Left cardiac atrium (tissue), 4 donors: ENCODE measurements at regions of chr5 and their contacts with region 1.

Region 1: GRCh38 chr5:15834596-15835245 is 334.7 kb downstream of the FBXL7 start:
- DNase-seq: no peak
- ATAC-seq: peak in 1 of 2 donors; percentile 89

Region 2: GRCh38 chr5:15995341-15996052 is 160.8 kb after region 1 on chr5:
- intact Hi-C with region 1: loop called in 1 of 2 experiments (anchors 10 kb)
- DNase-seq: no peak
- ATAC-seq: peak; percentile 44 to 59

Region 3: GRCh38 chr5:16108418-16108817 is 273.7 kb after region 1 on chr5:
- intact Hi-C with region 1: no loop called
- DNase-seq: no peak
- ATAC-seq: no peak

Region 4: GRCh38 chr5:16265141-16265540 is 430.4 kb after region 1 on chr5:
- intact Hi-C with region 1: no loop called
- DNase-seq: no peak
- ATAC-seq: no peak